Right ventricle myocardium inferior (tissue), 1 donor: ENCODE measurements at regions of chr1 and their contacts with region 1.

Region 1: DNA sequence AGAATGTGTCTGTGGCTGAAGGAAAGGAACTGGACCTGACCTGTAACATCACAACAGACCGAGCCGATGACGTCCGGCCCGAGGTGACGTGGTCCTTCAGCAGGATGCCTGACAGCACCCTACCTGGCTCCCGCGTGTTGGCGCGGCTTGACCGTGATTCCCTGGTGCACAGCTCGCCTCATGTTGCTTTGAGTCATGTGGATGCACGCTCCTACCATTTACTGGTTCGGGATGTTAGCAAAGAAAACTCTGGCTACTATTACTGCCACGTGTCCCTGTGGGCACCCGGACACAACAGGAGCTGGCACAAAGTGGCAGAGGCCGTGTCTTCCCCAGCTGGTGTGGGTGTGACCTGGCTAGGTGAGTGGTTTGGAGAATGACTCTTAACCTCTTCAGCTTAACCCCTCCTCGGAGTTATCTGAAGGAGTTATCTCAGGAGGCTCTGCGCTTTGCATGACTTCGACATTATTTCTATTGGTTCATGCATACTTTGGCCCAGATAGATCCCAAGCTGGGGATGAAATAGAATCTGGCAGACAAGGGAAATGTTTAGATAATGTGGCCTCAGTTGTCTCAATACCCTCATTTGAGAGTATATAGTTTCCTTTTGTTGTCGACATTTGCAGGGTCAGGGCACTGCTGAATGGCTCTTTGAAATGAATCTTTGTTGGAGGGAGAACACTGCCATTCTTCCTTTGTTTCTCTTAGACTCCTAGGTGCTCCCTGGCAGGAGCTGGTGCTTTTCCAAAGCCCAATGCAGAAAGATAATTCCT is 39.7 kb downstream of the PTGFRN start:
- DNase-seq: no peak
- ATAC-seq: no peak

Region 2: GRCh38 chr1:116871772-116872146 is 77.6 kb before region 1 on chr1:
- intact Hi-C with region 1: loop called (anchors 2 kb)
- DNase-seq: no peak
- ATAC-seq: peak; percentile 75

Region 3: DNA sequence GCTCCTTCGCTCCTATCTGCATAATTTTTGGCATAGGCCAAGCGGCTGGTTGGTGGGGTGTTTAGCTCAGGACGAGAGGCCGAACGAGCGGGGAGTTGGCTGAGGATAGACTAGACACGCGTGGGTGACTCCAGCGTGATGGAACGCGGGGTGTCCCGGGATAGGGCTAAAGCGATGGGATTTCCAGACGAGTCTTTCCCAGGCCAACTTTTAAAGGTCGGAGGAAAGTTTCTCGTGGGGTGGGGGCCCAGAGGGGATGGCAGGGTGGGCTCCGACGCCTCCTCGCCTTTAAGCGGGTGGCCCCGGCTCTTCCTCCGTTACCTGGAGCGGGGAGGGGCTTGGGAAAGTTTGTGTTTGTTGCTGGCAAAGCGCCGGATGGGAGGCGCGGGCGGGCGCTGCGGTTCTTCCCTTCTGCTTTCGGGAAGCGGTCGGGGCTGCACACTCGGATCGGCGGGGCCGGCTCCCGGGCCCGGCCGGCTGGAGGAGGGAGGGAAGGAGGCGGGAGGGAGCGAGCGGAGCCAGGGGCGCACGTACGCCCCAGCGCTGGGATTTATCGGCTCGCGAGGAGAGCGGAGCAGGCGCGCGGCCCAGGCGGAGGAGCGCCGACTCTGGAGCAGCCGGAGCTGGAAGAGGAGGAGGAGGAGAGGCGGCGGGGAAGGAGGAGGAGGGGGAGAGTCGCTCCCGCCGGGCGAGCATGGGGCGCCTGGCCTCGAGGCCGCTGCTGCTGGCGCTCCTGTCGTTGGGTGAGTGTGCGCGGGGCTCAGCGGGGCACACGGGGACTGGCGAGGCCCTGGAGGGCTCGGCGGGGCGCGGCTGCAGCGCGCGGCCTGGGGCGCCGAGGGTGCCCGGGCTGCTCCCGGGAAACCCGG is 39.7 kb before region 1 on chr1 and contains the start of gene PTGFRN:
- intact Hi-C with region 1: loop called (anchors 5 kb)
- DNase-seq: peak; percentile 83
- ATAC-seq: peak; percentile 87
- total RNA-seq, gene PTGFRN: 119 TPM